ENCODE measurements at regions of chr14 and their contacts with region 1.

Region 1: GRCh38 chr14:34875031-34875922 is at the start of gene BAZ1A:
- DNase-seq: peak; percentile 78
- H3K4me3 ChIP-seq: peak within 1 kb of the TSS; percentile 73 to 80
- H3K27ac ChIP-seq: peak within 1 kb of the TSS; percentile 99 to 100
- H3K4me1 ChIP-seq: no peaks in the 10 kb centered on the region
- H3K27me3 ChIP-seq: no peaks in the 10 kb centered on the region
- CTCF ChIP-seq: peak in 2 of 4 experiments; percentile 30 to 42
- POLR2A ChIP-seq: peak; percentile 97
- total RNA-seq, gene BAZ1A: 25.3 to 31.5 TPM

Region 2: GRCh38 chr14:34671716-34672115 is 203.6 kb before region 1 on chr14:
- intact Hi-C with region 1: loop called (anchors 2 kb)
- DNase-seq: no peak
- H3K4me3 ChIP-seq: no peak overlapping the region
- H3K27ac ChIP-seq: no peak overlapping the region
- H3K4me1 ChIP-seq: no peaks in the 10 kb centered on the region
- H3K27me3 ChIP-seq: no peaks in the 10 kb centered on the region
- CTCF ChIP-seq: no peak
- POLR2A ChIP-seq: no peak